Keratinocyte (primary cell): ENCODE measurements at regions of chr20 and their contacts with region 1.

Region 1: DNA sequence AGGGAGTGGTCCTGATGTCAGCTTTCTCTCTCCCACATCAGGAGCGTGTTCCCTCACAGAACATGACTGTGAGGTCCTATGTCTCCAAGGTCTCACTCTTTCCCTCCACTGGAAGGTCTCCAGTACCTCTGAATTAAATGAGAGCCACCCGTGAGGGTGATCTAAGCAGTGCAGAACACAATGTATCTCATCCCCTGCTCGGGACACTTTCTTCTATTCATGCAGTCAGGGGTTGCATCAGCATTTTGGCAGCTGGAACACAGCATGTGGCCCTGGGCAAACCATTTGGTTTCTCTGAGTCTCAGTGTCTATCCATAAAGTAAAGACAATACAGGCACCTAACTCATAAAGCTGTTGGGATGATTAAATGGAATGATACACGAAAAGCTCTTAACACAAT is 34.2 kb downstream of the MAFB start:
- DNase-seq: no peak
- H3K4me3 ChIP-seq: no peak overlapping the region
- H3K27ac ChIP-seq: no peak overlapping the region
- H3K4me1 ChIP-seq: peaks cover 19% of the 10 kb centered on the region
- H3K27me3 ChIP-seq: no peaks in the 10 kb centered on the region
- CTCF ChIP-seq: no peak

Region 2: GRCh38 chr20:40497899-40498691 is 156.8 kb before region 1 on chr20:
- dilution Hi-C with region 1: loop called (anchors 25 kb)
- DNase-seq: no peak
- H3K4me3 ChIP-seq: no peak overlapping the region
- H3K27ac ChIP-seq: no peak overlapping the region
- H3K4me1 ChIP-seq: peaks cover 31% of the 10 kb centered on the region
- H3K27me3 ChIP-seq: no peaks in the 10 kb centered on the region
- CTCF ChIP-seq: no peak